ENCODE measurements at regions of chr1 and their contacts with region 1.

Region 1: GRCh38 chr1:181159451-181160140 is 71.1 kb downstream of the IER5 start:
- DNase-seq: peak in 2 of 5 donors; percentile 33 to 55
- ATAC-seq: peak; percentile 39 to 76 (median 58)
- H3K4me3 ChIP-seq: no peak overlapping the region
- H3K27ac ChIP-seq: peak overlapping the region in 1 of 12 donors; percentile 41
- H3K4me1 ChIP-seq: peaks cover 0 to 35% (median 9%) of the 10 kb centered on the region in 12 donors
- H3K27me3 ChIP-seq: no peaks in the 10 kb centered on the region
- CTCF ChIP-seq: no peak
- POLR2A ChIP-seq: no peak

Region 2: DNA sequence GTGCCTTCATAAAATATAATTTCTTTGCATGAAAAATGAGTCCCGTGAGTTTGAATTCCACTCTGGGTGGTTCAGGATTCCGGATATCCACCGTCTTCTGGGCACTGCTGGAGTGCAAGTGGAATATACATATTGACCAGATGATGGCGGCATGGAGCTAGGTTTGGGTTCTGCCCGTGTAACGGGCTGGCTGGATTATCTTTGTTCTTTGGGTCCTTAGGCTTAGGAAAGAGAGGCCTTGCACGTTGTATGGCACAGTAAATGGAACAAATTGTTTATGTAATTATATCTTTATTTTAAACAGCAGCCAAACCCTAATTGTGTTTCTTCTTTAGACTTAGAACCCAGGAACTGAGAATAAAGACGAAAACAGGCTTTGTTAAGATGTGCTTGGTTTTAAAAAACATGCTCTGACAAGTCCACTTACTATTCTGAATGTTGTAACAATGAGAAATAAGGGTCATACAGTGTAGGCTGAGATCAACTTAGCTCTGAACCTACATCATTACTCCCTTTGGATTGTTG is 643.7 kb before region 1 on chr1:
- intact Hi-C with region 1: loop called in 8 of 10 experiments (anchors 5 to 10 kb)
- DNase-seq: peak in 4 of 5 donors; percentile 61 to 69 (median 66)
- ATAC-seq: peak; percentile 90 to 98 (median 96)
- H3K4me3 ChIP-seq: no peak overlapping the region
- H3K27ac ChIP-seq: peak overlapping the region in 1 of 12 donors; percentile 21
- H3K4me1 ChIP-seq: peaks cover 0 to 19% (median 10%) of the 10 kb centered on the region in 12 donors
- H3K27me3 ChIP-seq: no peaks in the 10 kb centered on the region
- CTCF ChIP-seq: peak; percentile 73 to 91 (median 88)
- POLR2A ChIP-seq: no peak

Region 3: DNA sequence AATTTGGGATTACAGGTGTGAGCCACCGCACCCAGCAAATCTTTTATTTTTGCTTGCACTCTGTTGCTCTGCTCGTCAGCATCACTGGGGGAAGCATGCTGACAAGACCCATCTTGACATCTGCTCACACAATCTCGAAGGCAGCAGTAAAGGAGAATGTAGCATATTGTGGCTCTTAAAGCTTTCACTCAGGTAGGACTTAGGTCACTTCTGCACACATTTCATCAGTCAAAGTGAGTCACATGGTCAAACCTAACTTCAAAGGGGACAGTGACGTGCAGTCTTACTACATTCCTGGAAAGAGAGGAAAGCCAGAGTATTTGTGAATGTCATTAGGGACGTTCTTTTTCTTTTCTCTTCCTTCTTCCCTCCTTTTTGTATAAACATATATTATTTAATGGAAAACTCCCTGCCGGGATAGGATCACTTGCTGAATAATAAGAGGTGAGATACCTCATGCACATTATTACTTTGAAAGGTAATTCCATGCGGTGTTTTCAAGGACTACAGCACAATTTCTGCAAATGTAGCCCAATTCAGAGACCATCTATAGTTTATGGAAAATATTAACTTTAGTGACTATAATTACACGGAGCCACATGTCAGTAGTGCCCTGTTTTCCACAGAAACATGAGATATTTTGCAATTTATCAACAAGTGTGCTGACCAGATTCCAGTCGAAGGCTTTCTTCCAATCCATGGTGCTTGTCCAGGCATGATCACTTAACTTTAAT is 638.0 kb before region 1 on chr1:
- intact Hi-C with region 1: loop called in 8 of 10 experiments (anchors 5 to 10 kb)
- DNase-seq: no peak
- ATAC-seq: no peak
- H3K4me3 ChIP-seq: no peak overlapping the region
- H3K27ac ChIP-seq: peak overlapping the region in 3 of 12 donors; percentile 22 to 36 (median 31)
- H3K4me1 ChIP-seq: peaks cover 0 to 37% (median 25%) of the 10 kb centered on the region in 12 donors
- H3K27me3 ChIP-seq: no peaks in the 10 kb centered on the region
- CTCF ChIP-seq: no peak
- POLR2A ChIP-seq: no peak

Region 4: DNA sequence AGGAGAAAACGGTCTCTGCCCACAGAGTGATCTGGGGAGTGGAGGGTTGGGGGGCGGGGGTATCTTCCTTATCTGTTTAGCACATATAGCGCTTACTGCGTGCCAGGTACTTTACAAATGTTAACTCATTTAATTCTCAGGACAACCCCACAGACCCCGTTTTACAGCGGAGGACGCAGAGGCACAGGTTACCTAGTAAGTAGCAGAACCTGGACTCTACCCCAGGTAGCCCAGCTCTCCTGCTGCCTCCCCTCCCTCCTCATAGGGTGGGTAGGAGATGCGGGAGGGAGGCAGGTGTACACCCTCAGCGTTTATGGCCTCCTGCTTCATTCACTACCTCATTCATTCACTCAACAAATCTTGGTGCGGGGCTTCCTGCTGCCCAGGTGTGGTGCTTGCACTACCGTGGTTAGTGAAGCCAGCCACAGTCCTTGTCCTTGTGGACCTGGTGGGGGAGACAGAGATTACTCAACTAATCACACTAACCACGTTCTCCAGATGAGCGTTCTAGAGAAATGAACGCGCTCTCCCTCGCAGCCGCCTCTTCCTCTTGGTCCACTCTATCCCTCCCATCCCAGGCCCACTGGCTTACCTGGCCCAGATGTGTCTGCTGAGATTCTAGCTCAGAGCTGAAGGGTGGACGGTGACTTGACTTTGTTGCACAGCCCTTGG is 30.9 kb after region 1 on chr1:
- intact Hi-C with region 1: no loop called
- DNase-seq: no peak
- ATAC-seq: peak in 2 of 4 donors; percentile 18 to 56
- H3K4me3 ChIP-seq: peak overlapping the region in 7 of 12 donors; percentile 28 to 40 (median 36)
- H3K27ac ChIP-seq: no peak overlapping the region
- H3K4me1 ChIP-seq: peaks cover 0 to 11% (median 5%) of the 10 kb centered on the region in 12 donors
- H3K27me3 ChIP-seq: peaks cover 0 to 17% (median 0%) of the 10 kb centered on the region in 9 donors
- CTCF ChIP-seq: no peak
- POLR2A ChIP-seq: no peak